HepG2 (cell line): ENCODE measurements at regions of chr12 and their contacts with region 1.

Region 1: DNA sequence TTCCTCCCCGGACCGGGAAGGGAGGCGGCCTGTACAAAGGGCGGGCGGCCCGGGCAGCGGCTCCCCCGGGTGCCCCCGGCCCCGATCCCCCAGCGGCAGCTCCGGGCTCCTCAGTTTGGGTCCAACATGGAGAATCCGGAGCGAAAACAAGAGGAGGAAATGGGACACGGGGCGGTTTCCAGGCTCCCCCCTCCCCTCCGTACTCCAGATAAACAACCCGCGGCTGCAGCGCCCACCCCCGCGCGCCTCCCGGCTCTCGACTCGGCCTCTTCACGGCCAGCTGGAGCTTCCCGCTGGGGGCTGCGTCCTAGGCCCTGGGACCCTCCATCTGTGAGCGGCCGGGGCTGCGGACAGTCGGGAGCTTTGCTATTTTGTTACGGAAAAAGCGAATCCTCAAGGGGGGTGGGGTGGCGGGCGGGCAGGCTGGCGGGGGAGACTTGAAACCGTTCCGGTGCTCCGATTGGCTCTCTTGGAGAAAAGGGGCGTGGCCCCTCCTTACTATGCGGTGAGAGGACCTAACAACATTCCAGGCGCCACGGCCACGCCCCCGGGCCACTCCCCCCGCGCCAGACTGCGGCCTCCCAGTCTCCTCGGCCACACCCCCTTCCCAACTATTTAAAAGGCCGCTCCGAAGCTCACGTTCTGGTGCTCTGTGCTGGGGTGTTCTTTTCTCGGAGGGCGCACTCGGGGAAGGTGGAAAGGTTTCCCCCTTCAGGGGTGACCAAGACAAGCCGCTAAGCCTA is at the start of gene CTDSP2:
- DNase-seq: peak; percentile 95
- ATAC-seq: peak; percentile 44
- H3K4me3 ChIP-seq: peak within 1 kb of the TSS; percentile 90 to 100 (median 99)
- H3K27ac ChIP-seq: peak within 1 kb of the TSS; percentile 99
- H3K4me1 ChIP-seq: peaks cover 45% of the 10 kb centered on the region
- H3K27me3 ChIP-seq: peaks cover 0 to 28% of the 10 kb centered on the region in 2 experiments; a peak in 3 of 5 replicates
- CTCF ChIP-seq: 0 out of 2 replicates have a peak, but pooled peaks have one; percentile 13
- EP300 ChIP-seq: peak in 1 of 2 experiments; percentile 11; a peak in 2 of 4 replicates
- POLR2A ChIP-seq: peak; percentile 44 to 72; a peak in 3 of 4 replicates
- RAD21 ChIP-seq: 0 out of 2 replicates have a peak, but pooled peaks have one; percentile 3
- total RNA-seq, gene CTDSP2: 38.1 and 42.4 TPM in 2 replicates

Region 2: DNA sequence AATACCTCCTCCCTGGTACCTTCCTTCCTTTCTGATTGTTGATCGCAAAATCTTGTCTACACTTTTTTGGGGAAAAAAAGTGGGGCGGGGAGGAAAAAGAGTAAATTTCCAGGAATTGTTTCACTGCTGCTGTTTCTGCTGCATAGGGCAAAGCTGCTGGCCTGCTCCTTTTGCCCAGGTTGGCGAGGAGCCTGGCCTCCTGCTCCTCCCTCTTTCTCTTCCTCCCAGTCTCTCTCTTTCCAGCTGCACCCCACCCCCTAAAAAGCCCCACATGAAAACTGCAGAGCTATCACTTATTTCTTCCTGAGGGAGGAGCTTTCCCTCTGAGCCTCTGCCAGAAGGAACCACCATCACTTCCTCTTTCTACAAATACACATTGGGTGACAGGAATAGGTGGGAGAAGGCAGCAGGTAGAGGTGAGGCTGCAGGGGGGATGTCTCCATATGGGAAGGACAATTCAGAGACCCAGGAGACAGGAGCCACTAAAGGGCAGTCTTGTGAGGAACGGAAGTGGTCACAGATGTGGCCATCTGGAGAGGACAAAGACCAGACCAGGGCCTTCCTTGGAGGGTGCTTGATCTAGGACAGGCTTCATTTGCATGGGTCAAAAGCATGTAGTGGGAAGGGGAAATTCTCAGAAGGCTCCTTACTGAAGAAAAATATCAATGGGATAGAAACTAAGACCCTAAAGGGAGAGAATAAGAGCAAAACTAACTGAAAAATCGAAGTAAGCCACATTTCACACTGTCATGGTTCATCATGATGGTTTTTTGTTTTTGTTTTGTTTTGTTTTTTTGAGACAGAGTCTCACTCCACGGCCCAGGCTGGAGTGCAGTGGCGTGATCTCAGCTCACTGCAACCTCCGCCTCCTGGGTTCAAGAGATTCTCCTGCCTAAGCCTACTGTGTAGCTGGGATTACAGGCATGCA is 855.2 kb before region 1 on chr12:
- CTCF ChIA-PET with region 1: no interaction called
- POLR2A ChIA-PET with region 1: no interaction called
- in situ Hi-C with region 1: no loop called
- intact Hi-C with region 1: no loop called
- DNase-seq: no peak
- ATAC-seq: no peak
- H3K4me3 ChIP-seq: no peak overlapping the region
- H3K27ac ChIP-seq: no peak overlapping the region
- H3K4me1 ChIP-seq: peaks cover 15% of the 10 kb centered on the region; the same call in 1 of the 2 replicates
- H3K27me3 ChIP-seq: no peaks in the 10 kb centered on the region; a peak in 1 of 5 replicates
- CTCF ChIP-seq: no peak
- EP300 ChIP-seq: no peak
- POLR2A ChIP-seq: no peak
- RAD21 ChIP-seq: no peak

Region 3: DNA sequence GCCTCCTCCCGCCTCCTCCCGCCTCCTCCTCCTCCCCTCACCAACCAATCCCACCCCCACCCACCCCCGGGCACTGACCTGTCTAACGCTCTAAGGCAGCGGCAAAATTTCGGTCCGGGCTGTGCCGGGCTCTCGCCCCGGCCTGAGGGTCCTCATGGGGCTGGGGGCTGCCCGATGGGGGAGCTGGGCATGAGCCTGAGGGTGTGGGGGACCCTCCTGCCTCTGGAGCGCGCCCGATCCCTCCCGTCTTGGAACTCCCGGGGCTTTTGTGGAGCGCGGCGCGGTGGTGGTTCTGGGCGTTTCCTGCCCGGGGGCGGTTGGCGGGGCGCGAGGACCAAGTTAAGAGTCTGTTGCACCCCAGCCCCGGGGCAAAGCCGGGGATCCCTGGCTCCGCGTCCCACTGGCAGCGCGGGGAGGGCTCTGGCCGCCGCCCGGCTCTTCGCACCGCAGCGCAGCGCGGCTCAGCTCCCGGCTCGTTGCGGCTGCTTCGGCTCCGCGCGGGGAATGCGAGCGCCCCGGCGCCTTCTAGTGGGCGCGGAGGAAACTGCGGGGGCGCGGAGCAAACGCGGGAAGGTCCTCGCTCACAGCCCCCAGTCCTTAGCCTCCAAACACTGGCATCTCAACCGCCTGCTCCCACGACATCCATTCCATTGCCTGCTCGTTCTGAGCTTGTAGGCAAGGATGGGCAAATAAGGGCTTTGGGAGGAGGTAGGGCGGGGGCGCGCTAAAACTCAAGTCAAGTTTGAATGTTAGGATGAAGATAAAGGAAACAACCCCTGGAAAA is 213.9 kb before region 1 on chr12 and contains the start of gene B4GALNT1:
- CTCF ChIA-PET with region 1: no interaction called
- POLR2A ChIA-PET with region 1: no interaction called
- in situ Hi-C with region 1: no loop called
- intact Hi-C with region 1: no loop called
- DNase-seq: no peak
- ATAC-seq: peak; percentile 91
- H3K4me3 ChIP-seq: peak within 1 kb of the TSS; percentile 66 to 77 (median 68)
- H3K27ac ChIP-seq: no peak within 1 kb of the TSS
- H3K4me1 ChIP-seq: peaks cover 22% of the 10 kb centered on the region
- H3K27me3 ChIP-seq: no peaks in the 10 kb centered on the region; a peak in 1 of 5 replicates
- CTCF ChIP-seq: peak; percentile 88
- EP300 ChIP-seq: no peak; a peak in 1 of 4 replicates
- POLR2A ChIP-seq: no peak
- RAD21 ChIP-seq: peak; percentile 92
- total RNA-seq, gene B4GALNT1: 1.9 and 4.5 TPM in 2 replicates

Region 4: DNA sequence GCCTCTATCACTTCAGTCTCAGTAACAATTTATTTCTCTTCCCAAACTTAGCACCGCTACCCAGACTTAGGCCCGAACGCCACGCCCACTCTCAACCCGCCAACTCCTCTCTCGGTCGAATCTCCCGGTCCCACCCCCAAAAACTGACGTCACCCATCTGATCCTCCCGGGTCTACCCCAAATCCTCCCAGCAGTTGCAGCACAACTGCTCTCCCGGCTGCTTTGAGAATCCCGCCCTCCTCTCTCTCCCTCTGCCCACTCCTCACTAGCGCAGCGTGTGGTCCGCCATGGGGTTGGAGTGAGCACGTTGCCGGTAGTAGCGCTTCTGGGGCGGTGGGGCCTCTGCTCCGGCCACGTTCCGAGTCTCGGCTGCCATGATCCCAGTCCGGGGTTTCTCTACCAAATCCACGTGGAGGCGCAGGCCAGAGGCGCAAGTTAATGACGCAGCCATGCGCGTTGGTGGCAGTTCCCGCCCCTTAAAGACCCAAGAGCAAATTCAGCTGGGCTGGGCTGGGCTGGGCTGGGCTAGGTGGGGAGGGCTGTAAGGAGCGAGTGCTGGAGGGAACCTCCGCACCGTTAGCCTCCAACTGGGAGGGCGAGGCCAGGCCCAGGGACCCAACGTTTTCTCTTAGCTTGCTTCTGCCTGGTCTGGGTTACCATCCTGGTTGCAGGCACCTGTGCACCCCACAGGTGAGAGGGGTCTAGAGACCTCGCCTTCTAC is 74.9 kb before region 1 on chr12 and contains the start of gene METTL1:
- CTCF ChIA-PET with region 1: no interaction called
- POLR2A ChIA-PET with region 1: interaction called, 7 read pairs
- in situ Hi-C with region 1: no loop called
- intact Hi-C with region 1: loop called (anchors 5 kb)
- DNase-seq: peak; percentile 95
- ATAC-seq: peak; percentile 91
- H3K4me3 ChIP-seq: peak within 1 kb of the TSS; percentile 77 to 89 (median 78)
- H3K27ac ChIP-seq: peak within 1 kb of the TSS; percentile 97
- H3K4me1 ChIP-seq: peaks cover 23% of the 10 kb centered on the region
- H3K27me3 ChIP-seq: no peaks in the 10 kb centered on the region; a peak in 1 of 5 replicates
- CTCF ChIP-seq: peak; percentile 39; the same call in 1 of the 2 replicates
- EP300 ChIP-seq: peak; percentile 36 to 45; a peak in 2 of 4 replicates
- POLR2A ChIP-seq: peak; percentile 89 to 92
- RAD21 ChIP-seq: no peak
- total RNA-seq, gene METTL1: 34.7 and 35.5 TPM in 2 replicates

Region 5: DNA sequence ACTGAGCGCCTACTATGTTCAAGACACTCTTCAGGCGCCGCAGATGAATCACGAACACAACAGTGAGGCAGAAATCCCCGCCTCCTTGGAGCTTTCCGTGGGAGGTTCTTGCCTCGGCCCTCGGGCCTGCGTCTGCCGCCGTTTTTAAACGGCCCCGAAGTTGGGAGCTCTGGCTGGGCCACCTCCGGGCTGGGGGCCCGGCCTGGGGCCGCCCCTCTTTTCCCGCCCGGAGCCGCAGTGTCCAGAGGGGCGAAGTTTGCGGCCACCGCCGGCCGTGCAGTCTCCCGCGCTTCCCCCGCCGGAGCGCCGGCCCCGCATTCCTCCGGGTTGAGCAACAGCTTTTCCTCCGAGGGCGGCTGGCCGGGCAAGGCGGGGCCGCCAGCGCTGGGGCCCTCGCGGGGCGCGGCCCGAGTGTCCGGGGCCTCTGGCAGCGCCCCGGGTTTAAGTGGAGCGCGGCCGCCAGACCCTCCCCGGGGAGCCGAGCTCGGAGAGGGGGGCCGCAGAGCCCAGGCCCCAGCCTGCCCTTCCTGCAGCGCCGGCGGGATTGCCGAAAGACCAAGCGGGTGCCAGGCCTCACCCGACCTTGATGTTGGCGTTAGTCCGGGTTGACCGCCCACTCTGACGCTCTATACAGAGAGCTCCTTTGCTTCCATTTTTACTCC is 18.5 kb after region 1 on chr12:
- CTCF ChIA-PET with region 1: no interaction called
- POLR2A ChIA-PET with region 1: interaction called, 23 read pairs
- in situ Hi-C with region 1: no loop called
- intact Hi-C with region 1: loop called (anchors 1 kb)
- DNase-seq: no peak
- ATAC-seq: peak; percentile 94
- H3K4me3 ChIP-seq: peak overlapping the region; percentile 49 to 74 (median 59)
- H3K27ac ChIP-seq: no peak overlapping the region
- H3K4me1 ChIP-seq: peaks cover 15% of the 10 kb centered on the region
- H3K27me3 ChIP-seq: peaks cover 4 to 65% of the 10 kb centered on the region in 2 experiments
- CTCF ChIP-seq: no peak
- EP300 ChIP-seq: no peak; a peak in 1 of 4 replicates
- POLR2A ChIP-seq: no peak
- RAD21 ChIP-seq: no peak; the same call in 1 of the 2 replicates

Region 6: GRCh38 chr12:57899010-57899662 is 52.4 kb after region 1 on chr12:
- CTCF ChIA-PET with region 1: no interaction called
- POLR2A ChIA-PET with region 1: interaction called, 110 read pairs
- in situ Hi-C with region 1: loop called (anchors 5 kb)
- intact Hi-C with region 1: no loop called
- DNase-seq: no peak
- ATAC-seq: no peak
- H3K4me3 ChIP-seq: no peak overlapping the region
- H3K27ac ChIP-seq: no peak overlapping the region
- H3K4me1 ChIP-seq: peaks cover 47% of the 10 kb centered on the region
- H3K27me3 ChIP-seq: peaks cover 0 to 47% of the 10 kb centered on the region in 2 experiments
- CTCF ChIP-seq: no peak
- EP300 ChIP-seq: no peak
- POLR2A ChIP-seq: no peak
- RAD21 ChIP-seq: no peak

Region 7: GRCh38 chr12:57941165-57941894 is 94.6 kb after region 1 on chr12 and contains the start of gene ATP23:
- CTCF ChIA-PET with region 1: no interaction called
- POLR2A ChIA-PET with region 1: interaction called, 13 read pairs
- in situ Hi-C with region 1: no loop called
- intact Hi-C with region 1: no loop called
- DNase-seq: peak; percentile 84
- ATAC-seq: peak; percentile 98
- H3K4me3 ChIP-seq: peak within 1 kb of the TSS; percentile 66 to 96 (median 81)
- H3K27ac ChIP-seq: peak within 1 kb of the TSS; percentile 88
- H3K4me1 ChIP-seq: peaks cover 40% of the 10 kb centered on the region
- H3K27me3 ChIP-seq: no peaks in the 10 kb centered on the region
- CTCF ChIP-seq: peak; percentile 22
- EP300 ChIP-seq: no peak
- POLR2A ChIP-seq: peak; percentile 90 to 93
- RAD21 ChIP-seq: no peak
- total RNA-seq, gene ATP23: 12.1 and 13.1 TPM in 2 replicates